ENCODE measurements at regions of chr9 and their contacts with region 1.

Region 1: DNA sequence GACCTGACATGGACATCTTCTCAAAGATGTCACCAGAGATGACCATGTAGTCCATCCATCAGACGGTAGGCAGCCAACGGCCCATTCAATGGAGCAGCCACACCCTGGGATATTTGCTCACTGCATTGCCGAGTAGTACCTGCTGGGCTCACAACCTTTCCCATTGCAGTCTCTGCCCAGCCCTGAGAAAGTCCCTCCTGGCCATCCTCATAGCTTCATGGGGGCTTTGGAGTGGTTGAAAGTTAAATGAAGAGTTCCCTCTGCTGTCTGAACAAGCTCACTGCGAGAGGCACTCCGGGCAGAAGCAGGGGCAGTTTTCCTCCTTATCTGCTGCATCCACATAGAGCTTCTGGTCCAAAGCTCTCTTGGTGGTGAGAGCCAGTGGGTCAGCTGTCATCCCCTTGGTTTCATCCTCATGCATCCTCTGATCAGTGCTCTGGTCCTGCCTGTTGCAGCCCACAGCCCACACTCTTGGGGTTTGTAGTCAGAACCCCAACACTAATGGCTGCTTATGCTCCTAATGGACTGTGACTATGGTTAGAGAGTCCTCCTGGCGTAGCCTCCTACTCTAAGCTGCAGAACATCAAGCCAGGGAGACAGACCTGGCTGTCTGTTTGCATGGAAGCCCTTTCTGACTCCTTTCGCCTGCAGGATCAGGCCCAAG is 23.4 kb downstream of the TNFSF8 start:
- DNase-seq: peak; percentile 64
- ATAC-seq: peak; percentile 35
- H3K4me3 Mint-ChIP-seq: no peak overlapping the region
- H3K27ac Mint-ChIP-seq: peak overlapping the region; percentile 89
- H3K4me1 Mint-ChIP-seq: peaks cover 55% of the 10 kb centered on the region
- H3K27me3 Mint-ChIP-seq: no peaks in the 10 kb centered on the region

Region 2: DNA sequence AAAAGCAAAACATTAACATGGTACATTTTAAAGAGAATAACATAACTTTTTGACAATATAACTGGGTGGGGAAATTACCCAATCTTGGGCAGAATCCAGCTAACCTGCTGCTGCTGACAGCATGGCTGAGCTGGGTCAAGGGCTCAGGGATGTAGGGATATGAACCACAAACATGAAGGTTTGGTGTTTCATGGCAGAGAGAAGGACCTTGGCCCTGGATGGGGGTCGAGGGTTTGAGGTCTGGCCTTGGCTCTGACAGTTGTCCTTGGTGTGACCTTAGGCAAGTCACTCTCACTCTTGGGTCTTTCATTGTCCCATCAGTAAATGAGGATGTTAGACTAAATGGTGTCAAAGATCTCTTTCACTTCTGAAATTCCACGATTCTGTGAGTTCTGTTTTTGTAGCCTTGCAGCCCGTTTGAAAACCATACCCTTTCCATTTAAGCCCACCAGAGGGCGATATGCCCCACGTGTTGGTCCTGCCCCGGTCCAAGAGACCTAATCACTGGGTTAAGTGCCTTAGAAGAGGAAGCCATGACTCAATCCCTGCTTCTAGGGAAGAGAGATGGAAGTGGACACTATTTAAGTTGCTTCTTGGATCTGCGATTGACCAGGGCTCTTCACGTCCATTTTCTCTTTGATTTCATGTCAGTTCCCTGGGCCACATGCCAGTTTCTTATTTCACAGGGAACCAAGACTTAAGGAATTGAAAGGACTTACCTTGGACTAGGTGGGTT is 168.3 kb before region 1 on chr9:
- CTCF ChIA-PET with region 1: interaction called, 132 read pairs
- DNase-seq: peak; percentile 84
- ATAC-seq: peak; percentile 83
- H3K4me3 Mint-ChIP-seq: no peak overlapping the region
- H3K27ac Mint-ChIP-seq: peak overlapping the region; percentile 89
- H3K4me1 Mint-ChIP-seq: peaks cover 58% of the 10 kb centered on the region
- H3K27me3 Mint-ChIP-seq: peaks cover 5% of the 10 kb centered on the region

Region 3: GRCh38 chr9:114745108-114745848 is 161.8 kb before region 1 on chr9:
- CTCF ChIA-PET with region 1: interaction called, 132 read pairs
- DNase-seq: no peak
- ATAC-seq: no peak
- H3K4me3 Mint-ChIP-seq: no peak overlapping the region
- H3K27ac Mint-ChIP-seq: no peak overlapping the region
- H3K4me1 Mint-ChIP-seq: peaks cover 7% of the 10 kb centered on the region
- H3K27me3 Mint-ChIP-seq: no peaks in the 10 kb centered on the region

Region 4: DNA sequence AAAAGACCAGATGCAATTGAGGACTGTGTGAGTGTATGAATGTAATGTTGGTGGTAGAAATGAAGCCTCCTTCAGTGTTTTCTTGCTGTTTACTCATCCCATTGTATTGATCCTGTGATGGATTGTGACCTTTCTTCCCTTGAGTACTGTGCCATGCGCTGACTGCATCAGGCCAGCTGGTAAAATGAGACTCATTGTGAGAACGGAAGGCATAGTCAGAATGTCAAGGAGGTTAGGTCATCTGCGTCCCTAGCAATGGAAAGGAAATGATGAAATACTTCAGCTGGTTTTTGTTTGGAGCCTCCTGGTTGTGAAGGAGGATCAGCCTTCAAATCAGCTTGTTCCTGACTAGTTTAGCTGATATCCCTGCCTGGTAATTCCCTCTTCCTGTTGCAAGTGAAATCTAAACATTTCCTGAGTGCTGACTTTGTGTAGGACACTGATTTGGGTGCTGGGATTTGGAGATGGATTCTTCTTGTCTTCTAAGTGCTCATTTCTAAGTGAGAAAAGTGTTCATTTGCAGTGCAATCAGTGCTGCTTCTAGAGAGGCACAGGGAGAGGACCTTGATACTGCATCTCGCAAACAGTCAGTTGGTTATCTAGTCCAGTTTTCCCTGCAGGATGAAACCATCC is 12.1 kb before region 1 on chr9:
- CTCF ChIA-PET with region 1: interaction called, 11 read pairs
- DNase-seq: peak; percentile 82
- ATAC-seq: peak; percentile 72
- H3K4me3 Mint-ChIP-seq: no peak overlapping the region
- H3K27ac Mint-ChIP-seq: peak overlapping the region; percentile 88
- H3K4me1 Mint-ChIP-seq: peaks cover 50% of the 10 kb centered on the region
- H3K27me3 Mint-ChIP-seq: no peaks in the 10 kb centered on the region

Region 5: DNA sequence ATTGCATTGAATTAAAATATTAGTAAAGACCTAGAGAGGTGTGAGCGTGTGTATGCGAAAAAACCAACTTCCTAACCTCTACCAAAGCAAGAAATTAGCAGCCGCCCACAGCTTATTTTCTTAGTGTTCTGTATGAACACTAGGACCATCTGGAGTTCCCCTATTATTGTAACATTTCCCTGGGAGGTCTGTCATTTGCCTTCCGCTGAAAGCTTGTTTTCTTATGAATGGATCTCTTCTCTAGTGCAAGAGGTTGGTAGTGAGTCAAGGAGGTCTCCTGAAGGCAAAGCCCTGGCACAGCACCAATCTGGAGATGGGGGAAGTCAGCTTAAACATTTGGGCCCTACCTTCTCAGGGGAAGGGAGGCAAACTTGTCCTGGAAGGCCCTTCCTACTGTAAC is 12.6 kb after region 1 on chr9:
- CTCF ChIA-PET with region 1: interaction called, 13 read pairs
- DNase-seq: no peak
- ATAC-seq: no peak
- H3K4me3 Mint-ChIP-seq: no peak overlapping the region
- H3K27ac Mint-ChIP-seq: peak overlapping the region; percentile 41
- H3K4me1 Mint-ChIP-seq: peaks cover 59% of the 10 kb centered on the region
- H3K27me3 Mint-ChIP-seq: no peaks in the 10 kb centered on the region

Region 6: GRCh38 chr9:114930056-114930812 is 23.2 kb after region 1 on chr9 and contains the start of gene TNFSF8:
- CTCF ChIA-PET with region 1: interaction called, 29 read pairs
- DNase-seq: peak; percentile 91
- ATAC-seq: peak; percentile 82
- H3K4me3 Mint-ChIP-seq: peak within 1 kb of the TSS; percentile 93
- H3K27ac Mint-ChIP-seq: peak within 1 kb of the TSS; percentile 98
- H3K4me1 Mint-ChIP-seq: peaks cover 42% of the 10 kb centered on the region
- H3K27me3 Mint-ChIP-seq: peaks cover 2% of the 10 kb centered on the region
- total RNA-seq, gene TNFSF8: 30.3 to 34.5 TPM

Region 7: GRCh38 chr9:115013998-115014397 is 107.0 kb after region 1 on chr9:
- CTCF ChIA-PET with region 1: interaction called, 83 read pairs
- DNase-seq: peak; percentile 88
- ATAC-seq: peak; percentile 97
- H3K4me3 Mint-ChIP-seq: no peak overlapping the region
- H3K27ac Mint-ChIP-seq: peak overlapping the region; percentile 47
- H3K4me1 Mint-ChIP-seq: peaks cover 37% of the 10 kb centered on the region
- H3K27me3 Mint-ChIP-seq: peaks cover 22% of the 10 kb centered on the region

Measured in activated CD8-positive, alpha-beta memory T cell treated with anti-CD3 and anti-CD28 coated beads, Interleukin-2, amount 10 ng/mL, durations not matched to agents 7 days and 5 days (primary cell).